Activated naive CD4-positive, alpha-beta T cell treated with anti-CD3 and anti-CD28 coated beads for 36 hours (primary cell): ENCODE measurements at regions of chr14 and their contacts with region 1.

Region 1: DNA sequence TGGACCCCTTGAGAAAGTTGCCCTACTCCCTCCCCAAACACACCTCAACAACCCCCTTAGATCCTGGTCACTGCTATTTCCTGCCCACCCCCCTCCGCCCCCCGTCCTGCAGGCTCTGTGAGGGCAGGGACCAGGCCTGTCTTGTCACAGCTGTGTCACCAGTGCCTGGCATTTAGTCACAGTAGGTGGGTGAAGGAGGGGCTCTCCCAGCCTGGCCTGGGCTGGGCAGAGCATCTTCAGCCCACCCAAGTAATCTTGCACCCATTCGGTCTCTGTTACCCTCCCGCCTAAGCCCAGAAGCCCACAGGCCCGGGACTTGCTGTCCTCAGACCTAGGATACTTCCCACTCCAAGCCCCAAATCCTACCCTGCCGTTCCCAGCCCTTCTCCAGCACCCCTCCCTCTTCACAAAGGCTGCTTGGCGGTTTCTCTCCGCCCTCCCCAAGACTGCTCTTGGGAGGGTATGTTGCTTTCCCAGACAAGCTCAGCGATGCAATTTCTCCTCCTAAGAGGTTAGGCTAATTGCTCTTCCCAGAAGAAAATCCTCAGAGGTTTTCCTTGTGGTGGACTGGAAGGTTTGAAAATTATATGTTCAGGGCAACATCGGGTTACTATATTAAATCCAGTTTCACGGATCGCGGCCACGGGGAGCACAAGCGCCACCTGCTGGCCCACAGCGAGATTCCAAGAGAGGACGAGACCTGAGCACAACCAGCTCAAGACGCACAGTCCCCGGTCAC is 50.8 kb upstream of the ZFP36L1 start:
- DNase-seq: peak; percentile 86
- H3K4me3 Mint-ChIP-seq: no peak overlapping the region
- H3K27ac Mint-ChIP-seq: no peak overlapping the region
- H3K4me1 Mint-ChIP-seq: peaks cover 23% of the 10 kb centered on the region
- H3K27me3 Mint-ChIP-seq: no peaks in the 10 kb centered on the region

Region 2: GRCh38 chr14:67943947-67944346 is 899.7 kb before region 1 on chr14:
- CTCF ChIA-PET with region 1: interaction called, 8 read pairs
- intact Hi-C with region 1: loop called (anchors 5 kb)
- DNase-seq: peak; percentile 65
- H3K4me3 Mint-ChIP-seq: no peak overlapping the region
- H3K27ac Mint-ChIP-seq: no peak overlapping the region
- H3K4me1 Mint-ChIP-seq: no peaks in the 10 kb centered on the region
- H3K27me3 Mint-ChIP-seq: no peaks in the 10 kb centered on the region

Region 3: GRCh38 chr14:68377459-68377858 is 466.2 kb before region 1 on chr14:
- CTCF ChIA-PET with region 1: no interaction called
- intact Hi-C with region 1: loop called (anchors 5 kb)
- DNase-seq: peak; percentile 6
- H3K4me3 Mint-ChIP-seq: no peak overlapping the region
- H3K27ac Mint-ChIP-seq: no peak overlapping the region
- H3K4me1 Mint-ChIP-seq: peaks cover 50% of the 10 kb centered on the region
- H3K27me3 Mint-ChIP-seq: no peaks in the 10 kb centered on the region

Region 4: GRCh38 chr14:68824517-68825347 is 18.9 kb before region 1 on chr14:
- CTCF ChIA-PET with region 1: interaction called, 47 read pairs
- intact Hi-C with region 1: loop called (anchors 2 kb)
- DNase-seq: peak; percentile 60
- H3K4me3 Mint-ChIP-seq: no peak overlapping the region
- H3K27ac Mint-ChIP-seq: no peak overlapping the region
- H3K4me1 Mint-ChIP-seq: peaks cover 29% of the 10 kb centered on the region
- H3K27me3 Mint-ChIP-seq: no peaks in the 10 kb centered on the region